Esophagus muscularis mucosa (tissue), 4 donors: ENCODE measurements at regions of chr1 and their contacts with region 1.

Region 1: DNA sequence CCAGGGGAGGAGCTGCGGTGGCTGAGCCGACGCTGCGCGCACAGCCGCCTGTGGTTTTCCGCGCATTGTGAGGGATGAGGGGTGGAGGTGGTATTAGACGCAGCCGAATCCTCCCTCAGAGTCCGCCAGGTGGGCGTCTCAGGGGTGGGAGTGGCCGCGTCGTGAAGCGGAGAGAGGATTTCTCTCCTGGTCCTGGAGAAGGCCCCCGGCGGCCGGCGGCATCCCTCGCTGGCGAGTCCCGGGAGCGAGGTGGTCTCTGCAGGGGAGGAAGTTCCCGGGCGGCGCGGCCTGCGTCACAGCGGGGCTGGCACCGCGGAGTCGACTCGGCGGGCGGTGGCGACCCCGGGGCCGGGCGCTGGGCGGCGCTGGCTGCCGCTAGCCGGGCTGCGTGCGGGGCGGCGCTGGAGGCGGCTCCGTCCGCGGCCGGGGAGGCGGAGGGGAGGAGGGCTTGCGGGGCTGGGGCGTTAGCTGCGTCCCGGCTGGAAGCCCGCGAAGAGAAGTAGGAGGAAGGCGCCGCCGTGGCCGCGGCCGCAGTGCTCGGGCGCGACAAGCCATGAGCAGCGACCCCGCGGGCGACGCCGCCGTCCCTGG is at the start of gene LRRC8C:
- DNase-seq: no peak
- H3K4me3 ChIP-seq: peak within 1 kb of the TSS; percentile 70 to 91 (median 86)
- H3K27ac ChIP-seq: peak within 1 kb of the TSS; percentile 85 to 90 (median 86)
- H3K4me1 ChIP-seq: peaks cover 8 to 26% (median 26%) of the 10 kb centered on the region in 4 donors
- H3K27me3 ChIP-seq: no peaks in the 10 kb centered on the region
- CTCF ChIP-seq: peak; percentile 33 to 67 (median 63)
- EP300 ChIP-seq: no peak
- POLR2A ChIP-seq: no peak
- total RNA-seq, gene LRRC8C: 5.8 to 8.9 (median 7.4) TPM

Region 2: DNA sequence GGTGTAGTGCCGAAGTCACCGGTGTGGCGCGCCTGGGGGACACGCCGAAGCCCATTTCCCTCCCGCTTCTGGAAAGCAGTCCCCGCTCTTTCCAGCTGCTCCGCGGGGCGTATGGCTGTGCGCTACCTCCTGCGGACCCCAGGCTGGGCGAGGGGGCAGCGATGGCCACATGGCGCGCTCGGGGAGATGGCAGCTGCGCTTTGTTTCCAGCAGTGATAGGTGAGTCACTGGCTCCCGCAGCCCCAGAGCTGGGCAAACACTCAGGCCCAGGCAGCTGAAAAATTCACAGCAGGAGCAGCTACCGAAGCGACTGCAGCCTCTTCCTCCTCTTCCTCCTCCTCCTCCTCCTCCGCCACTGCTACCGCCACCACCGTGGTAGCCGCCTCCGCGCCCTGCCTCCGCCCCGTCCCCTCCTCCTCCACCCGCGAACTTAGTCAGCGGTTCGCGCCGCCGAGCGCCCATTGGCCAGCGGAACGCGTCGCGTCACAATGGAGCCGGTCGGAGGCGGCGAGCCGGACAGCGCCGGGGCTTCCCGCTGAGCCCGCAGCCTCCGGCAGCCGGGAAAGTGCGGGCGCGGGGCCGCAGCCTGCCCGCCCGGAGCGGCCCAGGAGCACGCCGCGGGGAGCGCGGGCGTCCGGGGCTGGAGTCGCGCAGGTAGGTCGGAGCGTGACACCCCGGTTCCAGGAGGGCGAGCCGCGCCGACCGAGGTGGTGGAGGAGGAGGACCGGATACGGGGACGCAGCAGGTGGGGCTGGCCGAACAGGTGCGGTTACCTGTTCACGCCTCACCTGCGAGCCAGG is 108.2 kb before region 1 on chr1 and contains the start of gene LRRC8B:
- intact Hi-C with region 1: no loop called
- DNase-seq: peak; percentile 95
- H3K4me3 ChIP-seq: peak within 1 kb of the TSS; percentile 77 to 98 (median 96)
- H3K27ac ChIP-seq: peak within 1 kb of the TSS; percentile 85 to 94 (median 91)
- H3K4me1 ChIP-seq: peaks cover 8 to 31% (median 22%) of the 10 kb centered on the region in 4 donors
- H3K27me3 ChIP-seq: no peaks in the 10 kb centered on the region
- CTCF ChIP-seq: no peak
- EP300 ChIP-seq: no peak
- POLR2A ChIP-seq: peak; percentile 19
- total RNA-seq, gene LRRC8B: 3.3 to 9.2 (median 4.1) TPM

Region 3: GRCh38 chr1:89762779-89763648 is 130.3 kb after region 1 on chr1:
- intact Hi-C with region 1: loop called (anchors 2 kb)
- DNase-seq: peak; percentile 96
- H3K4me3 ChIP-seq: peak overlapping the region; percentile 50 to 65 (median 56)
- H3K27ac ChIP-seq: peak overlapping the region; percentile 57 to 63 (median 60)
- H3K4me1 ChIP-seq: peaks cover 23 to 45% (median 32%) of the 10 kb centered on the region in 4 donors
- H3K27me3 ChIP-seq: no peaks in the 10 kb centered on the region
- CTCF ChIP-seq: peak; percentile 93 to 100 (median 97)
- EP300 ChIP-seq: no peak
- POLR2A ChIP-seq: no peak

Region 4: DNA sequence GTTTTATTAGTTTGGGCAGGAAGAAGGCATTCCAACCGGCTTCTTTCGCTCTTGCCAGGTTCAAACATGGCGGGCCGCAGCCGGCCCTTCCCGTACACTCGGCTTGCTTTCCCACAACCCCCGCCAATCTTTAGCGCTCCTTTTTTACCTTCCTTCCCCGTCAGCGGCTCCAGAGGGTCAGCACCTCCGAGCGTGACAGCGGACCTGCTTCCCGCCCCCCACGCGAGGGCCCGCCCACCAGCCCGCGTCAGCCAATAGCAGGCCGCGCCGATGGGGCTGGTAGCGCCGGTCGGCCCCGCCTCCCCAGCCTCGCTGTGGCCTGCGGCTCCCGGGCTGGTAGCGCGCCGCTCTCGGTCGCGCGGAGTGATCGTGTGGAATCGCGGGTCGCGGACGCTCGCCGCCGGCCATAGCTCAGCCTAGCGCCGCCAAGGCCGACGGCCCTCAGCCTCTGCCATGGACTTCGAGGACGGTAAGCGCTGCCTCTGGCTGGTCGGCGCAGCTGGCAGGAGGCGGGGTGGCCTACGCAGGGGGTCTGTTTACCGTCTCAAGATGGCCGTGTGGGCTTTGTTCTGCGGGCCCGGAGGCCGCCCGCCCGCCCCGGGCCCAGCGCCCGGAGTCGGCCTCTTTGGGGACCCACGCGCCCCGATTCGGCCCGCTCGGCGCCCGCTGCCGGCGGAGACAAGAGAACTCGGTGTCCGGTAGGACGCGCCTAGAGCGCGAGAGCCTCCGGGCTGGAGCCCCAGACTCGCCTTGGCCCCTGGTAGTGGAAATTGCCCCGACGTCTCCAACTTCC is 362.2 kb after region 1 on chr1 and contains the start of gene ZNF326:
- intact Hi-C with region 1: loop called (anchors 10 kb)
- DNase-seq: peak; percentile 98
- H3K4me3 ChIP-seq: peak within 1 kb of the TSS; percentile 82 to 92 (median 88)
- H3K27ac ChIP-seq: peak within 1 kb of the TSS; percentile 94 to 98 (median 97)
- H3K4me1 ChIP-seq: peaks cover 20 to 38% (median 34%) of the 10 kb centered on the region in 4 donors
- H3K27me3 ChIP-seq: no peaks in the 10 kb centered on the region
- CTCF ChIP-seq: no peak
- EP300 ChIP-seq: no peak
- POLR2A ChIP-seq: peak; percentile 84
- total RNA-seq, gene ZNF326: 9.0 to 15.4 (median 9.9) TPM